ENCODE measurements at regions of chr21 and their contacts with region 1.

Region 1: GRCh38 chr21:38525454-38525853 is 27.2 kb upstream of the ERG start:
- DNase-seq: no peak
- H3K4me3 ChIP-seq: no peak overlapping the region
- H3K27ac ChIP-seq: no peak overlapping the region
- H3K4me1 ChIP-seq: no peaks in the 10 kb centered on the region
- H3K27me3 ChIP-seq: peaks cover 6% of the 10 kb centered on the region
- CTCF ChIP-seq: no peak

Region 2: DNA sequence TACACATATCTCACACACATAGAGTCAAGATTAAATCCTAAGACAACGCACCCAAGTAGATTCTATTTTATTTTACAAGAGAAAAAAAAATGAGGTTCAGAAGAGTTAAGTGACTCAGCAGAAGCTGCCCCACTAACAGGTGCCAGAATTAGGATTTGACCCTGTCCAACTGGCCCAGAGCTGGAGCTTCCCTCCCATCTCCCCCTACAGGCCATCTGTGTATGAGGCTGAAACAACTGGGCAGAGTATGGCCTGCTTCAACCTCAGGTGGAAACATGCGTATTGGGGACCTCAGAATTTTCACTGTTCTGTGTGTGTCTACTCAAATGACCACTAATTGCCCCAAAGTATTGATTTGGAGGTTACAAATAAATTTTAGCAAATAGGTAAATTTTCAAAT is 627.9 kb after region 1 on chr21:
- CTCF ChIA-PET with region 1: no interaction called
- dilution Hi-C with region 1: loop called (anchors 5 kb)
- in situ Hi-C with region 1: loop called in 1 of 2 experiments (anchors 25 kb)
- intact Hi-C with region 1: no loop called
- DNase-seq: no peak
- H3K4me3 ChIP-seq: no peak overlapping the region
- H3K27ac ChIP-seq: no peak overlapping the region
- H3K4me1 ChIP-seq: no peaks in the 10 kb centered on the region
- H3K27me3 ChIP-seq: no peaks in the 10 kb centered on the region
- CTCF ChIP-seq: peak; percentile 35 to 47

Measured in mammary epithelial cell (primary cell).